Motor neuron (in vitro differentiated cells): ENCODE measurements at regions of chr4 and their contacts with region 1.

Region 1: DNA sequence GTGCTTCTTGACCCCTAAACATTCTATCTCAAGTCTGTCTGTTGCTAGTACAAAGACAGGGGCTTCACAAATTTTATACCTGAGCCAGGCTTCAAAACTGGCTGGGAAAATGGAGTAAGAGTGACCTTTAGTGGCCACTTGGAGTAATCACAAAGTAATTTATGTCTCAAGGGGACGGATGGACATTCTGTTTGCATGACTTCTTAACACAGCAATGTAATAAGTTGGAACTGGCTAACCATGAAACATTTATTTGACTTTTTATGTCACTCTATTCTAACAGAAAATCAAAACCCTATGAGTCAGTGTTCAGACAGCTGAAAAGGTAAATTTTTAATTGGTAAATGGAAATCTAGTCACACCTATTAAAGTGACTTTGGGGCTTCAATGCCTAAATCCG is 600.6 kb downstream of the ANKRD50 start:
- ATAC-seq: peak; percentile 54 to 78 (median 62)
- H3K4me3 ChIP-seq: no peak overlapping the region
- H3K27ac ChIP-seq: no peak overlapping the region
- H3K4me1 ChIP-seq: no peaks in the 10 kb centered on the region

Region 2: DNA sequence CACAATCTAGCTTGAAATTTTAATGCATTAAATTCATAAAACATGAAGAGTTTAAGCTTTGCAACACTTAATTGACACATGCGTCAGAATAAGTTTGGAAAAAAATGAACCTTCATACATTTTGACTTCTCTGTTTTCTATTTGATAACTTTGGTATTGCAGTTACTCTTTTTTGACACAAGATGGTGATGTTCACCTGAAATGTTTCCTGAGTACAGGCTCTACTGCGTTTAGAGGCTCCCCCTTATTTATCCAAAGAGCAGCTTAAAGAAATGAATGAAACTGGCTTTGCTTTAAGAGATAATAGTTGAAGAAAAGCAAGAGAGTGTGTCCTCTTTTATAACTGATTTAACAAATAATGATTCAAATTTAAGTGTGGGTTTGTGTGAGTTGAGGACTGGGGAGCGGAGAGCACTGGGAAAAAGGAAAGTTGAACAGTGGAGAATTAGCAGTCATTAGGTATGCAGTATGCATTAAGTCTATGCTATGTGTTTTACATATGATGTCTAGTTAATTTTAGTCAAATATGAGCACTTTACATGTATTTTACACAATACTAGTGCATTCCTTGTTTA is 1008.9 kb before region 1 on chr4:
- in situ Hi-C with region 1: loop called in 1 of 9 experiments (anchors 25 kb)
- ATAC-seq: peak in 4 of 8 experiments; percentile 47 to 81 (median 58)
- H3K4me3 ChIP-seq: no peak overlapping the region
- H3K27ac ChIP-seq: no peak overlapping the region
- H3K4me1 ChIP-seq: peaks cover 0 to 2% of the 10 kb centered on the region in 2 donors

Region 3: GRCh38 chr4:123127218-123127617 is 984.7 kb before region 1 on chr4:
- in situ Hi-C with region 1: loop called in 2 of 9 experiments (anchors 25 kb)
- ATAC-seq: peak in 1 of 8 experiments; percentile 41
- H3K4me3 ChIP-seq: no peak overlapping the region
- H3K27ac ChIP-seq: no peak overlapping the region
- H3K4me1 ChIP-seq: no peaks in the 10 kb centered on the region

Region 4: DNA sequence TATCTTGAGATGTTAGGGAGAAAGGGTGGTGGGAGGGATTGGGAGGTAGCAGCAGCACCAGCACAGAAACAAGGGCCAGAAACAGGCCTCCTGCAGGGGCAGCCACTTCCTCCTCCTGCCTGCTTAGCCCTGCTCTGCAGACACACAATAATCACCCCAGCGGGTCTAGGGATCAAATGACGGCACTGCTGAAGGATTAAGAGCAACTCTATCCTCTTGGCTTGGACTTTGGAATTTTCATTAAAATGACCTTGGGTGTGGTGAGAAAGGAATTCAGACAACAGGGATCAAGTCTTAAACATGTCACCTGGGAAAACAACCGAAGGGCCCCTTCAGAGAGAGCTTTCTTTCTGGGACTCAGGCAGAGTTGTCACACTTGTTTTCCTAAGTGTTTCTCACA is 361.9 kb before region 1 on chr4:
- in situ Hi-C with region 1: loop called in 2 of 9 experiments (anchors 25 kb)
- ATAC-seq: no peak
- H3K4me3 ChIP-seq: no peak overlapping the region
- H3K27ac ChIP-seq: no peak overlapping the region
- H3K4me1 ChIP-seq: no peaks in the 10 kb centered on the region